ENCODE measurements at regions of chr13 and their contacts with region 1.

Region 1: GRCh38 chr13:31236211-31236786 is 36.5 kb downstream of the B3GLCT start:
- DNase-seq: peak; percentile 52
- H3K4me3 ChIP-seq: no peak overlapping the region
- H3K27ac ChIP-seq: no peak overlapping the region
- H3K4me1 ChIP-seq: no peaks in the 10 kb centered on the region; a peak in 1 of 4 replicates
- H3K27me3 ChIP-seq: no peaks in the 10 kb centered on the region
- CTCF ChIP-seq: peak; percentile 91
- EP300 ChIP-seq: no peak
- RAD21 ChIP-seq: peak; percentile 85

Region 2: GRCh38 chr13:31192306-31192705 is 44.0 kb before region 1 on chr13:
- CTCF ChIA-PET with region 1: interaction called, 10 read pairs
- POLR2A ChIA-PET with region 1: no interaction called
- DNase-seq: no peak
- H3K4me3 ChIP-seq: no peak overlapping the region
- H3K27ac ChIP-seq: no peak overlapping the region
- H3K4me1 ChIP-seq: no peaks in the 10 kb centered on the region
- H3K27me3 ChIP-seq: no peaks in the 10 kb centered on the region
- CTCF ChIP-seq: no peak
- EP300 ChIP-seq: no peak
- RAD21 ChIP-seq: no peak

Region 3: GRCh38 chr13:31209172-31209840 is 27.0 kb before region 1 on chr13:
- CTCF ChIA-PET with region 1: interaction called, 11 read pairs
- POLR2A ChIA-PET with region 1: no interaction called
- DNase-seq: peak; percentile 83
- H3K4me3 ChIP-seq: 0 out of 4 replicates have a peak overlapping the region, but pooled peaks of 1 of the 2 experiments have one; percentile 18
- H3K27ac ChIP-seq: peak overlapping the region; percentile 20 to 83; a peak in 3 of 4 replicates
- H3K4me1 ChIP-seq: peaks cover 22 to 32% of the 10 kb centered on the region in 2 experiments; a peak in 3 of 4 replicates
- H3K27me3 ChIP-seq: no peaks in the 10 kb centered on the region
- CTCF ChIP-seq: no peak
- EP300 ChIP-seq: no peak
- RAD21 ChIP-seq: no peak; the same call in 1 of the 2 replicates

Region 4: GRCh38 chr13:31248965-31249539 is 12.8 kb after region 1 on chr13:
- CTCF ChIA-PET with region 1: interaction called, 37 read pairs
- POLR2A ChIA-PET with region 1: no interaction called
- DNase-seq: no peak
- H3K4me3 ChIP-seq: no peak overlapping the region
- H3K27ac ChIP-seq: peak overlapping the region; percentile 17 to 18; a peak in 2 of 4 replicates
- H3K4me1 ChIP-seq: peaks cover 0 to 3% of the 10 kb centered on the region in 2 experiments; a peak in 1 of 4 replicates
- H3K27me3 ChIP-seq: no peaks in the 10 kb centered on the region
- CTCF ChIP-seq: no peak
- EP300 ChIP-seq: peak in 1 of 2 experiments; percentile 41; a peak in 2 of 4 replicates
- RAD21 ChIP-seq: no peak

Region 5: GRCh38 chr13:31424117-31424729 is 187.9 kb after region 1 on chr13:
- CTCF ChIA-PET with region 1: interaction called, 383 read pairs
- POLR2A ChIA-PET with region 1: no interaction called
- DNase-seq: peak; percentile 73
- H3K4me3 ChIP-seq: no peak overlapping the region; a peak in 1 of 4 replicates
- H3K27ac ChIP-seq: no peak overlapping the region
- H3K4me1 ChIP-seq: no peaks in the 10 kb centered on the region; a peak in 1 of 4 replicates
- H3K27me3 ChIP-seq: no peaks in the 10 kb centered on the region; the same call in 1 of the 2 replicates
- CTCF ChIP-seq: peak; percentile 92
- EP300 ChIP-seq: no peak
- RAD21 ChIP-seq: peak; percentile 96

Region 6: DNA sequence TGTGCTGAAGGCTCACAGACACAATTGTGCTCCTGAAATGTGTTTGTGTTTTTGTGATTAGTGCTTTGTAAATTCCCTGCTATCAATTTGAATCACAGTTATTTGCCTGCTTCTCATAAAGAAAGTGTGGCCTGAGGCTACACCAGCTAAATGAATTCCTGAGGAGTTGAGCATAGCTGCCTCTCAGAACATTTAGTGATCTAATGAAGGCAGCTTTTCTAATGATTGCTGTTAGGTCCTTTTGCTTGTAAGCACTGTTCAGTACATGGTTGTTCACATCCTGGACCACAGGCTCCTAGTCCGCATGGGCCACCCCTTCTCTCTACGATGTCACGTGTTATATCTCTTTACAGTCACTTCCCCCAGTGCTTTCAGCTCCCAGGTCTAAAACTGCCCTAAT is 201.7 kb after region 1 on chr13:
- CTCF ChIA-PET with region 1: interaction called, 11 read pairs
- POLR2A ChIA-PET with region 1: no interaction called
- DNase-seq: peak; percentile 6
- H3K4me3 ChIP-seq: no peak overlapping the region
- H3K27ac ChIP-seq: no peak overlapping the region; a peak in 1 of 4 replicates
- H3K4me1 ChIP-seq: peaks cover 0 to 8% of the 10 kb centered on the region in 2 experiments; a peak in 2 of 4 replicates
- H3K27me3 ChIP-seq: no peaks in the 10 kb centered on the region
- CTCF ChIP-seq: no peak
- EP300 ChIP-seq: no peak; a peak in 1 of 4 replicates
- RAD21 ChIP-seq: no peak

Region 7: GRCh38 chr13:31797154-31797775 is 561.0 kb after region 1 on chr13:
- CTCF ChIA-PET with region 1: interaction called, 17 read pairs
- POLR2A ChIA-PET with region 1: no interaction called
- DNase-seq: peak; percentile 61
- H3K4me3 ChIP-seq: no peak overlapping the region
- H3K27ac ChIP-seq: no peak overlapping the region
- H3K4me1 ChIP-seq: peaks cover 0 to 4% of the 10 kb centered on the region in 2 experiments; a peak in 2 of 4 replicates
- H3K27me3 ChIP-seq: no peaks in the 10 kb centered on the region
- CTCF ChIP-seq: peak; percentile 68
- EP300 ChIP-seq: no peak
- RAD21 ChIP-seq: peak; percentile 79